AG04450 (cell line): ENCODE measurements at regions of chr10 and their contacts with region 1.

Region 1: GRCh38 chr10:72273410-72274212 is at the start of gene DDIT4:
- DNase-seq: peak; percentile 99
- H3K4me3 ChIP-seq: peak within 1 kb of the TSS; percentile 98
- H3K27ac ChIP-seq: peak within 1 kb of the TSS; percentile 99
- H3K27me3 ChIP-seq: no peaks in the 10 kb centered on the region
- CTCF ChIP-seq: no peak
- polyA plus RNA-seq, gene DDIT4: 103 and 120 TPM in 2 replicates

Region 2: GRCh38 chr10:72146071-72146470 is 127.5 kb before region 1 on chr10:
- CTCF ChIA-PET with region 1: no interaction called
- POLR2A ChIA-PET with region 1: no interaction called
- DNase-seq: no peak
- H3K4me3 ChIP-seq: no peak overlapping the region
- H3K27ac ChIP-seq: no peak overlapping the region
- H3K27me3 ChIP-seq: no peaks in the 10 kb centered on the region
- CTCF ChIP-seq: no peak

Region 3: GRCh38 chr10:72215652-72216549 is 57.7 kb before region 1 on chr10 and contains the starts of genes ANAPC16 and ASCC1:
- CTCF ChIA-PET with region 1: interaction called, 6 read pairs
- POLR2A ChIA-PET with region 1: interaction called, 10 read pairs
- DNase-seq: peak; percentile 80
- H3K4me3 ChIP-seq: peak within 1 kb of the TSS; percentile 89
- H3K27ac ChIP-seq: peak within 1 kb of the TSS; percentile 97
- H3K27me3 ChIP-seq: no peaks in the 10 kb centered on the region
- CTCF ChIP-seq: no peak
- polyA plus RNA-seq, gene ANAPC16: 51.1 and 67.0 TPM in 2 replicates
- polyA plus RNA-seq, gene ASCC1: 36.3 and 43.7 TPM in 2 replicates

Region 4: GRCh38 chr10:72254813-72255568 is 18.6 kb before region 1 on chr10:
- CTCF ChIA-PET with region 1: interaction called, 5 read pairs
- POLR2A ChIA-PET with region 1: interaction called, 63 read pairs
- DNase-seq: no peak
- H3K4me3 ChIP-seq: peak overlapping the region; percentile 10; the same call in 1 of the 2 replicates
- H3K27ac ChIP-seq: peak overlapping the region; percentile 39
- H3K27me3 ChIP-seq: no peaks in the 10 kb centered on the region
- CTCF ChIP-seq: no peak

Region 5: GRCh38 chr10:72260588-72261322 is 12.9 kb before region 1 on chr10:
- CTCF ChIA-PET with region 1: interaction called, 5 read pairs
- POLR2A ChIA-PET with region 1: interaction called, 63 read pairs
- DNase-seq: no peak
- H3K4me3 ChIP-seq: peak overlapping the region; percentile 54
- H3K27ac ChIP-seq: peak overlapping the region; percentile 84
- H3K27me3 ChIP-seq: no peaks in the 10 kb centered on the region
- CTCF ChIP-seq: 0 out of 2 replicates have a peak, but pooled peaks have one; percentile 10

Region 6: GRCh38 chr10:72319416-72320254 is 46.0 kb after region 1 on chr10:
- CTCF ChIA-PET with region 1: interaction called, 5 read pairs
- POLR2A ChIA-PET with region 1: interaction called, 75 read pairs
- DNase-seq: peak; percentile 73
- H3K4me3 ChIP-seq: peak overlapping the region; percentile 50
- H3K27ac ChIP-seq: peak overlapping the region; percentile 100
- H3K27me3 ChIP-seq: no peaks in the 10 kb centered on the region
- CTCF ChIP-seq: no peak

Region 7: GRCh38 chr10:72331601-72332422 is 58.2 kb after region 1 on chr10:
- CTCF ChIA-PET with region 1: interaction called, 9 read pairs
- POLR2A ChIA-PET with region 1: interaction called, 35 read pairs
- DNase-seq: no peak
- H3K4me3 ChIP-seq: no peak overlapping the region
- H3K27ac ChIP-seq: no peak overlapping the region
- H3K27me3 ChIP-seq: no peaks in the 10 kb centered on the region
- CTCF ChIP-seq: no peak

Region 8: GRCh38 chr10:72337020-72337629 is 63.5 kb after region 1 on chr10:
- CTCF ChIA-PET with region 1: interaction called, 6 read pairs
- POLR2A ChIA-PET with region 1: interaction called, 12 read pairs
- DNase-seq: no peak
- H3K4me3 ChIP-seq: no peak overlapping the region
- H3K27ac ChIP-seq: no peak overlapping the region
- H3K27me3 ChIP-seq: no peaks in the 10 kb centered on the region
- CTCF ChIP-seq: peak; percentile 94